ENCODE measurements at regions of chr9 and their contacts with region 1.

Region 1: GRCh38 chr9:17453751-17454150 is 125.1 kb upstream of the SH3GL2 start:
- DNase-seq: no peak
- ATAC-seq: no peak
- H3K4me3 ChIP-seq: no peak overlapping the region
- H3K4me3 Mint-ChIP-seq: no peak overlapping the region
- H3K27ac ChIP-seq: no peak overlapping the region
- H3K27ac Mint-ChIP-seq: no peak overlapping the region
- H3K4me1 ChIP-seq: no peaks in the 10 kb centered on the region
- H3K4me1 Mint-ChIP-seq: no peaks in the 10 kb centered on the region
- H3K27me3 ChIP-seq: no peaks in the 10 kb centered on the region
- H3K27me3 Mint-ChIP-seq: no peaks in the 10 kb centered on the region

Region 2: GRCh38 chr9:17017931-17018491 is 435.7 kb before region 1 on chr9:
- CTCF ChIA-PET with region 1: no interaction called
- POLR2A ChIA-PET with region 1: no interaction called
- intact Hi-C with region 1: no loop called
- DNase-seq: no peak
- ATAC-seq: no peak
- H3K4me3 ChIP-seq: no peak overlapping the region
- H3K4me3 Mint-ChIP-seq: no peak overlapping the region
- H3K27ac ChIP-seq: no peak overlapping the region
- H3K27ac Mint-ChIP-seq: no peak overlapping the region
- H3K4me1 ChIP-seq: no peaks in the 10 kb centered on the region
- H3K4me1 Mint-ChIP-seq: peaks cover 0 to 2% (median 0%) of the 10 kb centered on the region in 7 donors
- H3K27me3 ChIP-seq: no peaks in the 10 kb centered on the region
- H3K27me3 Mint-ChIP-seq: peaks cover 0 to 4% (median 0%) of the 10 kb centered on the region in 5 donors

Region 3: DNA sequence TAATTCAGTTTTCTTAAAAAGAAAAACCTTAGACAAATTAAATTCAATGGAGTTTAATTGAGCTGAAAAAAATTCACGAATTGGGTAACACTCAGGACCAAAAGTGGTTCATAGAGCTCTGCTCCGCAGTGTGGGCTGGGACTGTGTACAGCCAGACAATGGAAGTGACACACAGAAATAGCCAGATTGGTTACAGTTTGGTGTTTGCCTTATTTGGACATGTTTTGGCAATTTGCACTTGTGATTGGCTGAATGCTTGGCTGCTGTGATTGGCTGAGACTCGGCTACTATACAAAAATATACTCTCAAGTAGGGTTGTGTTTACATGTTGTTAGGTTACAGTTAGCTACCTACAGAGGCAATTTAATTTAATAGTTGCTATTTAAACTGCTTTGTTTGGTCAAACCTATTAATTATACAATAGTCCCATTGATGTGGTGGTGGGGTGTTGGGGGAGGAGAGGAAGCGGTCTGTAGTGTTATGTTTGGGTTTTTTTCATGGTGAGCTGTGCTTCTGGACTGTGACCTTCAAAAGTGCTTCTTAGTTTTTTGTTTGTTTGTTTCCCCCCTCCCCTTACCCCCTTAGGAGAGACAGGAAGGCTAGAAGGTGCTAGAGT is 223.7 kb before region 1 on chr9:
- CTCF ChIA-PET with region 1: no interaction called
- POLR2A ChIA-PET with region 1: no interaction called
- intact Hi-C with region 1: loop called in 1 of 2 experiments (anchors 10 kb)
- DNase-seq: no peak
- ATAC-seq: no peak
- H3K4me3 ChIP-seq: no peak overlapping the region
- H3K4me3 Mint-ChIP-seq: no peak overlapping the region
- H3K27ac ChIP-seq: no peak overlapping the region
- H3K27ac Mint-ChIP-seq: no peak overlapping the region
- H3K4me1 ChIP-seq: no peaks in the 10 kb centered on the region
- H3K4me1 Mint-ChIP-seq: no peaks in the 10 kb centered on the region
- H3K27me3 ChIP-seq: no peaks in the 10 kb centered on the region
- H3K27me3 Mint-ChIP-seq: no peaks in the 10 kb centered on the region